Dendritic cell treated with granulocyte-macrophage colony-stimulating factor and Interleukin-4, amounts not matched to agents 40 ng/mL and 50 ng/mL, for 4 days (primary cell): ENCODE measurements at regions of chr2 and their contacts with region 1.

Region 1: DNA sequence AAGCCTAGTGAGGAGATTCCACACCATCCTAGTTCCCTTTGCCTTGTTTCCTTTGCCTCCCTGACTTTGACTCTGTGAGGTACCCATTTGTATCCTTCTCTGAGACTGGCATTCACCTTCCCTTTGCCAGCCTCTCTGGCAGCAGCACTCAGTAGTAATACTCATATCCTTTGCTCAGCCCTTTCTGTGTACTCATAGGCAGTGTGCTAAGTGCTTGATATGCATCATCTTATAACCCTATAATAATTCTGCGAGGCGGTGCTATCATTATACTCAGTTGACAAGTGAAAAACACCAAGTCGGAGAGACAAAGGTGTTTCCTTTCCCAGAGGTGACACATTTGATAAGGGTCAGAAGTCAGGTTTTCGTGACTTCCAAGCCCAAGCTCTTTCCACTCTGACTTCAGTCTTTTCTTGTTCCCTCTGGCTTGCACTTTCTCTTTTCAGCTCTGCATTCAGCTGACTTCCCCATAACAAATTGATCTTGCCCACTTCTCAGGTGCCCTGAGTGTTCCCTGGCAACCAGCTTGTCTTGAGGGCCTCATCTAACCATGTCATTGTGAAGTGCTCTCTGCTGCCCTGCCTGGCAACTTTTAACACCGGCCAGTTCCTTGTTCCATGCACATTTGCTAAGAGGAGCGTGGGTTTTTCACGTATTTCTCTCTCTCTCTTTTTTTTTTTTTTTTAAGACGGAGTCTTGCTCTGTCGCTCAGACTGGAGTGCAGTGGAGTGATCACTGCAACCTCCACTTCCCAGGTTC is 94.5 kb upstream of the UPP2 start:
- H3K4me3 Mint-ChIP-seq: no peak overlapping the region
- H3K27ac Mint-ChIP-seq: no peak overlapping the region
- H3K4me1 Mint-ChIP-seq: peaks cover 5% of the 10 kb centered on the region
- H3K27me3 Mint-ChIP-seq: no peaks in the 10 kb centered on the region

Region 2: DNA sequence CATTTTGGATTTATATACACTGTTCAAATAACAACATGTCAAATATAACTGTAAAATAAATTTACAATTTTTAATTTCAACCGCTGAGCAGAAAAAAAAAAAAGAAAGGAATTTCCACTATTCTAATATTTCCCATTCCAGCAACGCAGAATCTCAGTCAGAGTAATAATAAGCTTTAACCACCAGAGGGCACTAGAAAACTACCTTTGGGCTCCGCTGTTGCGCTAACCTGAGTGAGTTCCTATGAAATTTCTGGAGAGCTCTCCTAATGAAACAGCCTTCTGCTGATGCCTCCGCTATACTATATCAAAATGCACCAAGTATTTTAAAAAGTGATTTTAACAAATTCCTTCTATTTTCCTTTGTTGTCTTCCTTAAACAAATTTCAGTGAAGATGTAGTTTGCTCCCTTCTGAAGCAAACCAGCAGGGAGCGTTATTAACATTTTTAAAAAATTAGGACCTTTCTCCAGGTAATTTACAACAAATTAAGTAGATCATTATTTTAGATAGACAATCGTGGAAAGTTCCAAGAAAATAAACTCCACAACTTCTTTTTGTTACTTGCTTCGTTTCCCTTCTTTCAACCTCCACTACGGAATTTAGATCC is 704.5 kb before region 1 on chr2:
- intact Hi-C with region 1: loop called (anchors 5 kb)
- H3K4me3 Mint-ChIP-seq: no peak overlapping the region
- H3K27ac Mint-ChIP-seq: no peak overlapping the region
- H3K4me1 Mint-ChIP-seq: peaks cover 5% of the 10 kb centered on the region
- H3K27me3 Mint-ChIP-seq: peaks cover 5% of the 10 kb centered on the region

Region 3: GRCh38 chr2:157492189-157492773 is 514.9 kb before region 1 on chr2:
- intact Hi-C with region 1: loop called (anchors 2 kb)
- H3K4me3 Mint-ChIP-seq: no peak overlapping the region
- H3K27ac Mint-ChIP-seq: peak overlapping the region; percentile 21
- H3K4me1 Mint-ChIP-seq: peaks cover 38% of the 10 kb centered on the region
- H3K27me3 Mint-ChIP-seq: no peaks in the 10 kb centered on the region

Region 4: DNA sequence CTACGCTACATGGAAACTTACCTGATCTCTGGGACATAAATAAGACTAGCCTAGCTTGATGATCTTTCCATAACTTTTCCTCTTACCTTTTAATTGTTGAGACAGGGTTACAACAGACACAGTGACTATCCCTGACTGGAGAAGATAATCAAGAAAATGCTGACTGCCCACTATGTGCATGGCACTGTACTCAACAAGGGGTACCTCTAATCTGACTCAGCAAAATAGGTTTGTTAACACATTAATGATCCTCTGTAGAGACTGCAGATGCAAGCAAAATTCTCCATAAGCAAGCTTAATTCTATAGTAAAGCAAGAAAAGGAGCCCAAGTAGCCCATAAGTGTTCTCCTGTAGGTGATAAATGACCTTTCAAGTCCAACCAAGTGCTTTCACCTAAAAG is 403.9 kb before region 1 on chr2:
- intact Hi-C with region 1: loop called (anchors 10 kb)
- H3K4me3 Mint-ChIP-seq: no peak overlapping the region
- H3K27ac Mint-ChIP-seq: no peak overlapping the region
- H3K4me1 Mint-ChIP-seq: no peaks in the 10 kb centered on the region
- H3K27me3 Mint-ChIP-seq: no peaks in the 10 kb centered on the region

Region 5: DNA sequence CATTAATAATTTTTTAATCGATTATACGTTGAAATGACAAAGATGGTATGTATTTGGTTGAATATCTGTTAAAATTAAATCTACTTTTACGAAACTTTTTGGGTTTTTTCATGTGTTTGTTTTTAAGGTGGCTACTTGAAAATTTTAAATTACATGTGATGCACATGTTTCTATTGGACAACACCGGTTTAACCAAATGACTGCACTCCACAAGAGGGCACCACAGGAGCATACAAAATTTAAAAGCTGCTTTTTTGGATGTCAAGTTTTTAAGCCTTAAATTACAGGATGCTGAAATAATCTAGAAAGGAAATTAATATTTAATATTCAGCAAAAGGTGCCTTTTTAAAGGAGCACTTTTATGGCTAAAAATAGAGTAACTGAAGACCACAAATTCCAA is 229.7 kb before region 1 on chr2:
- intact Hi-C with region 1: loop called (anchors 1 kb)
- H3K4me3 Mint-ChIP-seq: no peak overlapping the region
- H3K27ac Mint-ChIP-seq: no peak overlapping the region
- H3K4me1 Mint-ChIP-seq: no peaks in the 10 kb centered on the region
- H3K27me3 Mint-ChIP-seq: no peaks in the 10 kb centered on the region

Region 6: GRCh38 chr2:157901325-157901724 is 105.8 kb before region 1 on chr2:
- intact Hi-C with region 1: loop called (anchors 10 kb)
- H3K4me3 Mint-ChIP-seq: no peak overlapping the region
- H3K27ac Mint-ChIP-seq: no peak overlapping the region
- H3K4me1 Mint-ChIP-seq: peaks cover 25% of the 10 kb centered on the region
- H3K27me3 Mint-ChIP-seq: no peaks in the 10 kb centered on the region